Tibial artery (tissue), 4 donors: ENCODE measurements at regions of chr1 and their contacts with region 1.

Region 1: GRCh38 chr1:74767490-74767889 is 34.5 kb downstream of the TYW3 start:
- DNase-seq: no peak
- H3K4me3 ChIP-seq: no peak overlapping the region
- H3K27ac ChIP-seq: no peak overlapping the region
- H3K4me1 ChIP-seq: no peaks in the 10 kb centered on the region
- H3K27me3 ChIP-seq: no peaks in the 10 kb centered on the region
- CTCF ChIP-seq: no peak

Region 2: DNA sequence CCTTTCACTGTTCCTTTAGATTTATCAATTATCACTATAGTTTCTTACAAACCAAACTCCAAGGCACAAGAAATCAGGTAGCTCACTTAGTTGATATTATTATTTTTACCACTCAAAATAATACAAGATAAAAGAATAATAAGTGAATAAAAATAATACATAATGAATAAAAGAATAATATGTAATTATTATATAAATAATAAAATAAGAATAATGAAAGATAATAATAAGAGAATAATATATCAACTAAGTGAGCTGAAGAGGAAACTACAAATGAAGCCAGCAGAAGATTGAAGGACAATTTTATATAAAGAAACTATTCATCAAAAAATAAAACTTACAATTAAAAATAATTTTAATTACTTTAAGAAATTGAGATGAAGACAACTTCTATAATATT is 660.1 kb before region 1 on chr1:
- intact Hi-C with region 1: no loop called
- DNase-seq: no peak
- H3K4me3 ChIP-seq: no peak overlapping the region
- H3K27ac ChIP-seq: no peak overlapping the region
- H3K4me1 ChIP-seq: no peaks in the 10 kb centered on the region
- H3K27me3 ChIP-seq: no peaks in the 10 kb centered on the region
- CTCF ChIP-seq: no peak

Region 3: DNA sequence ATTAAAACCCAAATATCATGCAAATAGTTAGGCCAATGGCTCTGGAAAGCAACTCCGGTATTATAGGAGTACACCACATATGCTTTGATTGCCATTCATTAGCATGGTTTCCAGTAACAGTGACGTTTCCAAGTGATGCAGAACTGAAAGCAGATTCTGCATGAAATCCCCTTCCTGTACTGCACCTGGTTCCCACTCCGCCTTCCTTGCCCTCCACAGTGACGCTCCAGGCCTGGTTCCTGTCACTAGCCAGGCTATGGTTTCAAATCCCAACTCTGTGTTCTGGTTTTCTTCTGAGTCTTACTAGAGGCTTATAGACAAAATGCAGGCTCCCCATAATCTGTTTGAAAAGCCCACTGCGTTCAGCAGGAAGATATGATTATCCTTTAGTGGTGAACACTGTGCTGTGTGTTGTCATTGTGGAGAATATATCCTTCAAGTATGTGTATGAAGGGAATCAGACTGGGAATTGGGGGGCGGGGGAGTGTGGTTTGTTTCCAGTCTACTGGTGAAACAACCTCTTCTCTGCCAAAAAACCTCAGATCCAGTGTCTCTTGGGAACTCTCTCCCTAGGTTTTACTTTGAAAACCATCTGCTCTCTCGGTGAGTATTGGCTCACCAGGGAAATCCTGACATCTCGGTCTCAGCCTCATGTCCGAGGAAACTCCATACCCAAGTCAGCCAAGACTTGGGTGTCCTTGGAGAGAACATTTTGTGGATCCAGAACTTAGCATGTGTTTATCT is 44.1 kb after region 1 on chr1:
- intact Hi-C with region 1: no loop called
- DNase-seq: no peak
- H3K4me3 ChIP-seq: no peak overlapping the region
- H3K27ac ChIP-seq: no peak overlapping the region
- H3K4me1 ChIP-seq: no peaks in the 10 kb centered on the region
- H3K27me3 ChIP-seq: no peaks in the 10 kb centered on the region
- CTCF ChIP-seq: no peak

Region 4: GRCh38 chr1:74913978-74914377 is 146.5 kb after region 1 on chr1:
- intact Hi-C with region 1: no loop called
- DNase-seq: no peak
- H3K4me3 ChIP-seq: no peak overlapping the region
- H3K27ac ChIP-seq: no peak overlapping the region
- H3K4me1 ChIP-seq: no peaks in the 10 kb centered on the region
- H3K27me3 ChIP-seq: no peaks in the 10 kb centered on the region
- CTCF ChIP-seq: no peak

Region 5: DNA sequence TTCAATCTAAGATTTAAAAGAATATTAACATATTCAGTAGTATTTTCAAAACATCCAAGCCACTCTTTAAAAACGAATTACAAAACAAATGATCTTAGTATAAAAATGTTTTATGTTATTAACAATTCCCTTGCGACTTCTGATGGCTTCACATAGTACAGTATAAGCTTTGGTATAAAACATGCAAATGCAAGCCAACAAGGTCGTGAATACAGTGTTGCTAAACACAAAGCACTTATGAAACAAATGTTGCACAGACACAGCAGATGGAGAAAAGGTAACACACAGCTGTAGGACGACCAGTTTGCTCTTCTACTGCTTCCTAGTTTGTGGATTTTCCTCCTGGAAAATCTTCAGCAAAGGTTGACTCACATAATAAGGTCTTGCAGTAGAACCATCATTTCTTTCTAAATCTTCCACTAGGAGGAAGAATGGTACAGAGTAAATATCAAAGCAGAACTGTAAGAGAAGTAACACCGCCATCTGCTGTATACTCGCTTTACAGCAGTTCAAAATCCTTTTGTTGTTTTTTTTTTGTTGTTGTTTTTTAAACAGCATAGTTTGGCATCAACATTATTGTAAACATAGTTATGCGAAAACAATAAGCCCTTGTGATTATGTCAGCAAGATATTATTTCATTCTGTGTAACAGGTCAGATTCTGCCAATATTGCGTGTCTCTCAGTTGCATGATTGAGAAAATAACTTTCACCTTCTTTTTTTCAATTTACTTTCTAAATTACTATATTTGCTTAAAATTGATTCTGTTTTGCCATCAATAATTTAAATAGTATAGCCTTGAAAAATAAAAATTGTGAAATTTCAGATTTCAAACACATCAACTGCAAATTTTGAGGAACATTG is 436.2 kb after region 1 on chr1:
- intact Hi-C with region 1: loop called (anchors 10 kb)
- DNase-seq: no peak
- H3K4me3 ChIP-seq: no peak overlapping the region
- H3K27ac ChIP-seq: no peak overlapping the region
- H3K4me1 ChIP-seq: no peaks in the 10 kb centered on the region
- H3K27me3 ChIP-seq: no peaks in the 10 kb centered on the region
- CTCF ChIP-seq: peak; percentile 39 to 40